Panc1 (cell line): ENCODE measurements at regions of chr15 and their contacts with region 1.

Region 1: GRCh38 chr15:36109943-36110658 is 469.3 kb upstream of the CDIN1 start:
- DNase-seq: no peak
- ATAC-seq: no peak
- H3K4me3 ChIP-seq: no peak overlapping the region
- H3K27ac ChIP-seq: no peak overlapping the region
- H3K4me1 ChIP-seq: no peaks in the 10 kb centered on the region
- H3K27me3 ChIP-seq: no peaks in the 10 kb centered on the region
- CTCF ChIP-seq: no peak

Region 2: DNA sequence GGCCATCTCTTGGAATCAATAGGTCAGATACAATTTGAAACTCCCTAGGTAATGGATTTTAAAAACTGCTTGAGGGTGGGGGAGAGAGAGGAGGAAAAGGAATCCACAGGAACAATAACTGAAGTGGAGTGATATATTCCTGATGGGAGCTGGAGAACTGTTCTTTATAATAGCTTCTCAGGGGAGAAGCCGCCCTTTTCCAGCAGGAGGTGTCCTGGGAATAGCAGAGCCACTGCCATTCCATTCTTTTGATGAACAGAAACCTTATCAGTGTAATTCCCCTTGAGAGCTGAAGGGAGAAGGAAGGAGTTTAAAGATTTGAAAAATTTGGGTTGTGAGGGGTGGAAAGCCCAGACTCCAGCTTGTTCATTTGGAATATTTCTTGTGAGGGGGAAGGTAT is 59.2 kb before region 1 on chr15:
- CTCF ChIA-PET with region 1: interaction called, 13 read pairs
- POLR2A ChIA-PET with region 1: no interaction called
- in situ Hi-C with region 1: no loop called
- intact Hi-C with region 1: no loop called
- DNase-seq: no peak
- ATAC-seq: no peak
- H3K4me3 ChIP-seq: no peak overlapping the region
- H3K27ac ChIP-seq: no peak overlapping the region
- H3K4me1 ChIP-seq: no peaks in the 10 kb centered on the region
- H3K27me3 ChIP-seq: no peaks in the 10 kb centered on the region
- CTCF ChIP-seq: no peak

Region 3: DNA sequence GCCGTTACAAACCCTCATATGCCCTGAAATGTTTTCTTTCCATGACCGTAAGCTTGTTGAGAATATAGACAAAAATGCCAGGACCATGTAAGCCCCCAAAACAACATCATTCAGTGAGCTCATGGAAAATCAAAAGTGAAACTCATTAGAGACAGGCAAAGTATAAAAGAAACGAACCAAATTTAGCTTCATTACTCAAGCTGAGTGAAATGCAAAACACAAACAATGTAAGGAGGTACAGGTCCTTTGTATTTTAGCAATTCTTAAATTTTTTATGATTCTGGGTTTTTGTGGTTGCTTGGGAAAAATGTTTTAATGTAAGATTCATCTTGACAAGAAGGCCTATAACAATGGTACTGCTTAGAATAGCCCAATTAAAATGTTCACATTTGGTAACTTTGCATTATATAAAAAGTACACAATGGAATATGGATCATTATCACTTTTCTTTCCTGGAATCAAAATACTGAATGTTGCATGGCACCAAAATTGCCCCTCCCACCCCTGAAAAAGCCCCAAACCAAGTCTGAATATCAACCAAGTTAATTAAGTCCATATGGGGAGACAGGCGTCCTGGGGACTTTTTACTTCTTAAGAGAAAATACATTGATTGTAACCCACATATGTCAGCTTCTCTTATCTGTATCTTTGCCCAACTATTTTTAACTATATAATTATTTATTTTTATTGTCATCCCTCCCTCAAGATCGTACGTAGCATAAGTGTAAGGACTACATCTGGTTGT is 221.6 kb after region 1 on chr15:
- CTCF ChIA-PET with region 1: no interaction called
- POLR2A ChIA-PET with region 1: no interaction called
- in situ Hi-C with region 1: no loop called
- intact Hi-C with region 1: no loop called
- DNase-seq: no peak
- ATAC-seq: no peak
- H3K4me3 ChIP-seq: peak overlapping the region in 1 of 2 experiments; percentile 3; a peak in 1 of 4 replicates
- H3K27ac ChIP-seq: no peak overlapping the region
- H3K4me1 ChIP-seq: no peaks in the 10 kb centered on the region
- H3K27me3 ChIP-seq: no peaks in the 10 kb centered on the region
- CTCF ChIP-seq: no peak